ENCODE measurements at regions of chr2 and their contacts with region 1.

Region 1: GRCh38 chr2:71068218-71069035 is at the start of gene NAGK:
- DNase-seq: peak; percentile 96 to 97
- ATAC-seq: peak; percentile 94 to 98 (median 96)
- H3K4me3 ChIP-seq: peak within 1 kb of the TSS; percentile 52 to 99 (median 87)
- H3K27ac ChIP-seq: peak within 1 kb of the TSS; percentile 86 to 98 (median 94)
- H3K4me1 ChIP-seq: peaks cover 7 to 82% (median 36%) of the 10 kb centered on the region in 9 donors
- H3K27me3 ChIP-seq: no peaks in the 10 kb centered on the region
- CTCF ChIP-seq: peak in 1 of 9 donors; percentile 4
- total RNA-seq, gene NAGK: 40.4 to 93.4 (median 44.5) TPM

Region 2: GRCh38 chr2:70994756-70995729 is 73.4 kb before region 1 on chr2 and contains the start of gene TEX261:
- intact Hi-C with region 1: loop called in 1 of 10 experiments (anchors 5 kb)
- DNase-seq: peak; percentile 89 to 92
- ATAC-seq: peak; percentile 97 to 99 (median 98)
- H3K4me3 ChIP-seq: peak within 1 kb of the TSS; percentile 70 to 100 (median 98)
- H3K27ac ChIP-seq: peak within 1 kb of the TSS in 9 of 10 donors; percentile 75 to 94 (median 87)
- H3K4me1 ChIP-seq: peaks cover 7 to 31% (median 20%) of the 10 kb centered on the region in 9 donors
- H3K27me3 ChIP-seq: no peaks in the 10 kb centered on the region
- CTCF ChIP-seq: peak; percentile 57 to 91 (median 80)
- total RNA-seq, gene TEX261: 35.9 to 67.0 (median 45.1) TPM

Region 3: GRCh38 chr2:71130113-71130904 is 61.9 kb after region 1 on chr2 and contains the starts of genes MCEE and MPHOSPH10:
- intact Hi-C with region 1: loop called in 2 of 10 experiments (anchors 2 to 5 kb)
- DNase-seq: peak; percentile 90 to 92
- ATAC-seq: peak; percentile 96 to 98 (median 98)
- H3K4me3 ChIP-seq: peak within 1 kb of the TSS; percentile 65 to 97 (median 86)
- H3K27ac ChIP-seq: peak within 1 kb of the TSS; percentile 68 to 97 (median 96)
- H3K4me1 ChIP-seq: peaks cover 9 to 50% (median 41%) of the 10 kb centered on the region in 9 donors
- H3K27me3 ChIP-seq: no peaks in the 10 kb centered on the region
- CTCF ChIP-seq: no peak
- total RNA-seq, gene MCEE: 29.6 to 43.8 (median 35.3) TPM
- total RNA-seq, gene MPHOSPH10: 18.9 to 32.1 (median 22.9) TPM